Heart right ventricle (tissue), 16 donors: ENCODE measurements at regions of chr12 and their contacts with region 1.

Region 1: GRCh38 chr12:8780389-8780788 is 42.0 kb upstream of the A2ML1 start:
- DNase-seq: no peak
- ATAC-seq: peak in 1 of 8 donors; percentile 56
- H3K4me3 ChIP-seq: no peak overlapping the region
- H3K27ac ChIP-seq: no peak overlapping the region
- H3K4me1 ChIP-seq: peaks cover 0 to 32% (median 12%) of the 10 kb centered on the region in 9 donors
- H3K27me3 ChIP-seq: no peaks in the 10 kb centered on the region
- CTCF ChIP-seq: peak in 7 of 9 donors; percentile 20 to 55 (median 35)

Region 2: DNA sequence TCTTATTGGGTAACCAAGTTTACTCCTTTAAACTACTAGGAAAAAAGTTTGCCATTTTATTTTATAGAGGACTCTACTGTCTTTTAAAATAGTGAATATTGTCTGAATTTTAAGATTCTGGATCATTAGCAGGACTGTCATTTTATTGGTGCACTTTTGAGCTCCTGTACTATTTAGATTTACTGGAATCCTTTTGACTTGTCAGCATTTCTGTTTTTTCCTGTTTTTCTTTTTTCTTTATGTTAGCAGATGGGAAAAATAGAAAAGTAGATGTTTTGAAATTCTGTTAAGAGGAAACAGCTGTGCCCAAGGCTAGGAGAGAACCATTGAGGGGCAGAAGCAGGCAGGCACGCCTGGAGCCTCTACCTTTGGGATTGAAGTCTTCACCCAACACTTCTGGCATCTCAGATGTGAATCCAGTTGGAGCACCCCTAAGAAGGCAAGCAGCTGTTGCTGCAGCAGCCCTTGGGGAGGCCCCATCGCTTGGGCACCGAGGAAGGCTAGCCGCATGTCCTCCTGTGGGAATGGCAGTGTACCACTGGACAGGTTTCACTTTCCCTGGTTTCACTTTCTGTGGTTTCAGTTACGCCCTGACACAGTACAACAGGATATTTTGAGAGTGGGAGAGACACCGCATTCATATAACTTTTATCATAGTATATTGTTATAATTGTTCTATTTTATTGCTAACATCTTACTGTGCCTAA is 71.1 kb before region 1 on chr12:
- intact Hi-C with region 1: loop called in 1 of 10 experiments (anchors 10 kb)
- DNase-seq: peak; percentile 24 to 29
- ATAC-seq: peak in 7 of 8 donors; percentile 76 to 89 (median 82)
- H3K4me3 ChIP-seq: peak overlapping the region in 9 of 10 donors; percentile 15 to 48 (median 42)
- H3K27ac ChIP-seq: peak overlapping the region in 9 of 10 donors; percentile 35 to 78 (median 49)
- H3K4me1 ChIP-seq: peaks cover 0 to 53% (median 26%) of the 10 kb centered on the region in 9 donors
- H3K27me3 ChIP-seq: no peaks in the 10 kb centered on the region
- CTCF ChIP-seq: no peak

Region 3: DNA sequence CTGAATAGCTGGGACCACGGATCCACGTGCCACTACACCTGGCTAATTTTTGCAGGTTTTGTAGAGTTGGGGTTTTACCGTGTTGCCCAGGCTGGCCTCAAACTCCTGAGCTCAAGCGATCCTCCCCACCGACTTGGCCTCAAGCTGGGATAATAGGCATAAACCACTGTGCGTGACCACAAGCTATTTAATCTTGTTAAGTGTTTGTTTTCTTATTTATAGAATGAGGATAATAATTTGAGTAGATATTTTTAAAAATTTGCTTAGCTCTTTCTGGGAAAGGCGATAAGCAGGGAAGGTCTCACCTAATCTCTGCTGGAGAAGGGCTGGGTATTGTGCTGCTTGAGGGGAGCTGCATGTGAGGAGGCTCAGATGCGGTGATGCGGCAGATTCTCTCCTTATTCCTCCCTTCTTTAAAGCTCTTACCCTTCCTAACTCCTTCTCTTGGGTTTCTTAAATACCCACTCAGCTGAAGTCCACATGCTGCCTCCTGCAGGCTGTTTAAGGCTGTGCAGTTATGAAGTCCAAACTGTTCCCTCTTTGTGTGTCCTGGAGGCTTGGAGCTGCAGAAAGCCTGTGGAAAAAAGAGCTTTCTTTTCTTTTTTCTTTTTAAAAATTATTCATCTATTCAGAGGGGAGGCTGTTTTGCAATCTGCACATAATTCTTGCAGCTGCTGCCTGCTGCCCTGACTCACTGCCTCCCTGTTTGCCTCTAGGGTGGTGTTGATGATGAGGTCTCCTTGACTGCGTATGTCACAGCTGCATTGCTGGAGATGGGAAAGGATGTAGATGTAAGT is 80.0 kb after region 1 on chr12:
- intact Hi-C with region 1: loop called in 1 of 10 experiments (anchors 10 kb)
- DNase-seq: peak; percentile 13 to 32
- ATAC-seq: peak in 6 of 8 donors; percentile 41 to 73 (median 70)
- H3K4me3 ChIP-seq: no peak overlapping the region
- H3K27ac ChIP-seq: no peak overlapping the region
- H3K4me1 ChIP-seq: no peaks in the 10 kb centered on the region
- H3K27me3 ChIP-seq: no peaks in the 10 kb centered on the region
- CTCF ChIP-seq: peak; percentile 32 to 75 (median 66)

Region 4: GRCh38 chr12:8890313-8891085 is 110.1 kb after region 1 on chr12:
- intact Hi-C with region 1: loop called in 5 of 10 experiments (anchors 5 to 10 kb)
- DNase-seq: peak in 1 of 2 donors; percentile 66
- ATAC-seq: peak; percentile 55 to 88 (median 82)
- H3K4me3 ChIP-seq: peak overlapping the region in 9 of 10 donors; percentile 18 to 58 (median 55)
- H3K27ac ChIP-seq: peak overlapping the region in 4 of 10 donors; percentile 36 to 54 (median 44)
- H3K4me1 ChIP-seq: peaks cover 0 to 5% (median 0%) of the 10 kb centered on the region in 9 donors
- H3K27me3 ChIP-seq: no peaks in the 10 kb centered on the region
- CTCF ChIP-seq: peak; percentile 72 to 94 (median 87)